CD8-positive, alpha-beta T cell (primary cell): ENCODE measurements at regions of chr2 and their contacts with region 1.

Region 1: GRCh38 chr2:178112202-178113152 is at the start of gene RBM45:
- DNase-seq: peak; percentile 62 to 93 (median 85)
- ATAC-seq: peak; percentile 91
- H3K4me3 ChIP-seq: peak within 1 kb of the TSS; percentile 73 to 81
- H3K4me3 Mint-ChIP-seq: peak within 1 kb of the TSS; percentile 94
- H3K27ac ChIP-seq: peak within 1 kb of the TSS; percentile 59 to 60
- H3K27ac Mint-ChIP-seq: peak within 1 kb of the TSS; percentile 89
- H3K4me1 ChIP-seq: peaks cover 16% of the 10 kb centered on the region
- H3K4me1 Mint-ChIP-seq: peaks cover 44% of the 10 kb centered on the region
- H3K27me3 ChIP-seq: no peaks in the 10 kb centered on the region
- H3K27me3 Mint-ChIP-seq: no peaks in the 10 kb centered on the region
- CTCF ChIP-seq: peak; percentile 95
- total RNA-seq, gene RBM45: 6.4 to 6.8 TPM

Region 2: GRCh38 chr2:177618255-177619253 is 493.9 kb before region 1 on chr2:
- CTCF ChIA-PET with region 1: no interaction called
- POLR2A ChIA-PET with region 1: no interaction called
- intact Hi-C with region 1: loop called (anchors 2 to 10 kb)
- DNase-seq: peak; percentile 80 to 96 (median 91)
- ATAC-seq: peak; percentile 89
- H3K4me3 ChIP-seq: peak overlapping the region; percentile 89 to 93
- H3K4me3 Mint-ChIP-seq: peak overlapping the region; percentile 97
- H3K27ac ChIP-seq: peak overlapping the region; percentile 97 to 99
- H3K27ac Mint-ChIP-seq: peak overlapping the region; percentile 98
- H3K4me1 ChIP-seq: peaks cover 8% of the 10 kb centered on the region
- H3K4me1 Mint-ChIP-seq: peaks cover 7% of the 10 kb centered on the region
- H3K27me3 ChIP-seq: no peaks in the 10 kb centered on the region
- H3K27me3 Mint-ChIP-seq: no peaks in the 10 kb centered on the region
- CTCF ChIP-seq: no peak

Region 3: DNA sequence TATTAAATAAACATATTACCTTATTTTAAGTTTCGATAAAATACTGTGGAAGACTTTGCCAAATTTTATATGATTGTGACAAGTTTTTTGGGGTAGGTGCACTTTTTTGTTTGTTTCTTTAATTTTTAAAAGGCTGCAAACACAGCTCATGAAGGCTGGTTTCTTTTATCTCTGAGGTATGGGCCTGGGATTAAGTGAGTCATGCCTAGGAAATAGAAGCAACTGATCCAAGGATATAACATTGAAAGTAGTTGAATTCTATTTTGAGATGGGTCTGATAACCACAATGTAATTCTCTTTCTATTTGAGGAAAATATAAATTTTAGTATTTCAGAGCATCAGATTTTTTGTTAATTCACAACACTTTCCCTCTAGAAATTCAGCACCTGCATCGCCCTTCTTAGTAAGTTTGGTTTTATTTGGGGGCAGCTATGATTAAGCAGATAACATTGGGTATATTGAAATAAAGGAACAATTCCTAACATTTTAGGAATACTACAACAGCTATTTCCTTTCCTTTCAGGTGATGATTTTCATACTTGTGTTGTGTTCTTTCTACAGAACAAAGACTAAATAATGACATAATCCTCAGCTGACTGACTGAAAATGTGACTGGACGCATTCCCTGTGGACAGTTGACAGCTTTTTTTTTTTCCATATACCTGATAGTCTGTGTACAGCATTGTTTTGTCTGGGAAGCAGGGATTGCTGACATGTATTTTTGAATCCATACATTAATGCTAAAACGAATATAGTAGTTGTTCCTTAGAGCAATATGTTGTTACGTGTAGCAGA is 16.6 kb after region 1 on chr2:
- CTCF ChIA-PET with region 1: interaction called, 21 read pairs
- POLR2A ChIA-PET with region 1: interaction called, 3 read pairs
- intact Hi-C with region 1: no loop called
- DNase-seq: no peak
- ATAC-seq: no peak
- H3K4me3 ChIP-seq: no peak overlapping the region
- H3K4me3 Mint-ChIP-seq: no peak overlapping the region
- H3K27ac ChIP-seq: no peak overlapping the region
- H3K27ac Mint-ChIP-seq: no peak overlapping the region
- H3K4me1 ChIP-seq: no peaks in the 10 kb centered on the region
- H3K4me1 Mint-ChIP-seq: peaks cover 2% of the 10 kb centered on the region
- H3K27me3 ChIP-seq: no peaks in the 10 kb centered on the region
- H3K27me3 Mint-ChIP-seq: no peaks in the 10 kb centered on the region
- CTCF ChIP-seq: no peak

Region 4: GRCh38 chr2:178163395-178163794 is 50.9 kb after region 1 on chr2:
- CTCF ChIA-PET with region 1: no interaction called
- POLR2A ChIA-PET with region 1: no interaction called
- intact Hi-C with region 1: no loop called
- DNase-seq: no peak
- ATAC-seq: no peak
- H3K4me3 ChIP-seq: no peak overlapping the region
- H3K4me3 Mint-ChIP-seq: no peak overlapping the region
- H3K27ac ChIP-seq: no peak overlapping the region
- H3K27ac Mint-ChIP-seq: no peak overlapping the region
- H3K4me1 ChIP-seq: no peaks in the 10 kb centered on the region
- H3K4me1 Mint-ChIP-seq: no peaks in the 10 kb centered on the region
- H3K27me3 ChIP-seq: no peaks in the 10 kb centered on the region
- H3K27me3 Mint-ChIP-seq: peaks cover 10% of the 10 kb centered on the region
- CTCF ChIP-seq: no peak

Region 5: DNA sequence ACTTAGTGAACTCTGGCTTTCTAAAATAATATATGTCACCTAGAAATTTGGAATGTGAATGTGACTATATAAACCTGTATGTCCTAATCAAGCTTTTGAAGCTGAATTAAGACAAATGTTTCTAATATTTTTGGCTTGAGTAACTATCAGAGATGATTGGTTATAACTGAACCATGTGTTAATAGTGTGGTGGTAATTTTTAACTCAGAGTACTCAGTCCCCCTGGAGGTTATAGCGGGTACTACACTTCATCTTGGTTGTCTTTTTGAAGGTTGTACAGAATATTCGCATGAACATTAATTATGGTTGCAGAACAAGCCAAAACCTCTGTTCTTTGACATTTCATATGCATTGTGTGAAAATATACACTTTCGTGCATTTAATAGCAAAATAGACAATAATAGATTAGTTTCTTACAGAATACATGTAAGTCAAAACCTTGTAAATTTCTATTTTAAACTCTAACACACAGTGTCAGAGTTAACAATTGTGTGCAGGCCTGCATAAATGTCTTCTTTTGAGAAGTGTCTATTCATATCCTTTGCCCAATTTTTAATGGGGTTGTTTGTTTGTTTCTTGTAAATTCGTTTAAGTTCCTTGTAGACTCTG is 167.9 kb after region 1 on chr2:
- CTCF ChIA-PET with region 1: interaction called, 9 read pairs
- POLR2A ChIA-PET with region 1: no interaction called
- intact Hi-C with region 1: loop called (anchors 1 to 2 kb)
- DNase-seq: peak in 5 of 9 experiments; percentile 15 to 54 (median 32)
- ATAC-seq: peak; percentile 75
- H3K4me3 ChIP-seq: no peak overlapping the region
- H3K4me3 Mint-ChIP-seq: no peak overlapping the region
- H3K27ac ChIP-seq: no peak overlapping the region
- H3K27ac Mint-ChIP-seq: no peak overlapping the region
- H3K4me1 ChIP-seq: no peaks in the 10 kb centered on the region
- H3K4me1 Mint-ChIP-seq: no peaks in the 10 kb centered on the region
- H3K27me3 ChIP-seq: no peaks in the 10 kb centered on the region
- H3K27me3 Mint-ChIP-seq: peaks cover 20% of the 10 kb centered on the region
- CTCF ChIP-seq: peak; percentile 79

Region 6: DNA sequence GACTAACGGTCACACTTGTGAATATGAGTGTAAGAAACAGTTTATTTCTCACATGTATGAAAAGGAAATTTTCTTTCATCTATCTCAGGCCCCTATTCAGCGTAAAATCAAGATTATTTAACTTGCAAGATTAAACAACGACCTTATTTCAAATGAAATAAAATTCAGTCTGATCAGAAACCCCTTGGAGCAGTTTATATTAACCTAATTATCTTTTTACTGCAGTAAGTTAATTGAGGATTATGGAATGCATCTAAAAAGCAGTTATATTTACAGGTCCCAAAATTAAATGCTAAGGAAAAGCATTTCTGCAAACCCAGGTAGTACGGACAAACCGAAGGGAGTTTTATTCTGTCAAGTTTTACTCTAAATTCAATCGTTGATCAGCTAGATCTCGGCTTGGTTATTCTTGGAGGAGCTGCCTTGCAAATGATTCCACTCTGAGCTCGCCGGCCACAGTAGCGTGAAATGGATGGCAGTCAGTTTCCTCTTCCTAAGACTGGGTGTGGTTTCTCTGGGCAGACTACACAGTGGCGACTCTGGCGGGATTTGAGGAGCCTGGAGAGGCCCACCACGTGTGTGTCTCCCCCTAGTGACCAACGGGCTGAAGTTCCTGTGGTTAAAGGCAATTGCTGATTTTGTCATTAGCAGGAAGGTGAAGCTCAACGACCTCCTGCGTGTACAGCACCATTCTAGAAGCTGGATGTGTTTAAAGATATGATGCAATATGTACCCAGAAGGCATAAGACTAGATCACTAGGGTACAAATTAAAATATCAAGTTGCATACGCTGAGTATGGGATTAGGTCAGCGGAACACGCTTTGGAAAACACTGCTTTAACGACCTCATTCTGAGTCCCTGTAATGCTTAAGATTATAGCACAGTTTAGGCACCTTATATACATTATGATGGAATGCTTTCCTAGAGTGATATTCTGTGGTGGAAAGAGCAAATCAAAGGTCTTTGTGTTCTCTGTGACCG is 302.1 kb after region 1 on chr2:
- CTCF ChIA-PET with region 1: interaction called, 17 read pairs
- POLR2A ChIA-PET with region 1: no interaction called
- intact Hi-C with region 1: loop called (anchors 1 to 2 kb)
- DNase-seq: peak; percentile 51 to 90 (median 75)
- ATAC-seq: peak; percentile 53
- H3K4me3 ChIP-seq: peak overlapping the region; percentile 54 to 66
- H3K4me3 Mint-ChIP-seq: peak overlapping the region; percentile 80
- H3K27ac ChIP-seq: peak overlapping the region; percentile 84 to 86
- H3K27ac Mint-ChIP-seq: peak overlapping the region; percentile 97
- H3K4me1 ChIP-seq: peaks cover 7% of the 10 kb centered on the region
- H3K4me1 Mint-ChIP-seq: peaks cover 30% of the 10 kb centered on the region
- H3K27me3 ChIP-seq: no peaks in the 10 kb centered on the region
- H3K27me3 Mint-ChIP-seq: no peaks in the 10 kb centered on the region
- CTCF ChIP-seq: peak; percentile 87

Region 7: GRCh38 chr2:178426388-178426787 is 313.9 kb after region 1 on chr2:
- CTCF ChIA-PET with region 1: no interaction called
- POLR2A ChIA-PET with region 1: no interaction called
- intact Hi-C with region 1: no loop called
- DNase-seq: no peak
- ATAC-seq: no peak
- H3K4me3 ChIP-seq: no peak overlapping the region
- H3K4me3 Mint-ChIP-seq: no peak overlapping the region
- H3K27ac ChIP-seq: no peak overlapping the region
- H3K27ac Mint-ChIP-seq: no peak overlapping the region
- H3K4me1 ChIP-seq: no peaks in the 10 kb centered on the region
- H3K4me1 Mint-ChIP-seq: no peaks in the 10 kb centered on the region
- H3K27me3 ChIP-seq: no peaks in the 10 kb centered on the region
- H3K27me3 Mint-ChIP-seq: no peaks in the 10 kb centered on the region
- CTCF ChIP-seq: no peak

Region 8: DNA sequence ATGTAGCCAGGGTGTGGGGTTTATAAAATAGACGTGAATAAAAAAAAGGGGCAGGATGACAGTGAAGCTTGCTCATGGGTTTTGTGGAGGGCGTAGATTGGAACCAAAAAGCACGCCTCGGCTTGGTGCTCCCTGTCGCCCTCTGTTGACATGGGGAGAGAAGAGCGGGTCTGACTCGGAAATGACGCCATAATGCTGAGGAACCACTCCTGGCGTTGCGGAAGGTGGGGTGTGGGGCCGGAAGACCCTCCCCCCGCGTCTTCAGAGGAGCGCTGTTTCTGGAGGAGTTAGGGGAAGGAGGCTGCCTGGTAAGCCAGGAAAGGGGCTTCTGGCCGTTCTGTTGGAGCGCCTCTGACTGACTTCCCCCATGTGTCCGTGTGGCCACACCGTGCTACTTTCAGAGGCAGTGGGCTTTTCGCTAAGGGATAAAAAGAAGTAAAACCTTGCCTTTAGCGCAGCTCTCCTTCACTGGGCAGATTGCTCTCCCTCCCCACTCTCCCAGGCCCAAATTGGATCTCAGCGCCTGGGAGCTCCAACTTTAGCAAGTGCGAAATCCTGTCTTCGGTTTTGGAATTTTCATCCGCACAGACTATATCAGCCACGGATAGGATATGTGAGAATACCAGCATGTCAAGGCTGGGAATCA is 410.6 kb after region 1 on chr2:
- CTCF ChIA-PET with region 1: no interaction called
- POLR2A ChIA-PET with region 1: no interaction called
- intact Hi-C with region 1: loop called in 1 of 2 experiments (anchors 5 kb)
- DNase-seq: peak; percentile 58 to 92 (median 81)
- ATAC-seq: peak; percentile 99
- H3K4me3 ChIP-seq: peak overlapping the region; percentile 65 to 82
- H3K4me3 Mint-ChIP-seq: peak overlapping the region; percentile 94
- H3K27ac ChIP-seq: peak overlapping the region; percentile 55 to 74
- H3K27ac Mint-ChIP-seq: peak overlapping the region; percentile 90
- H3K4me1 ChIP-seq: peaks cover 10% of the 10 kb centered on the region
- H3K4me1 Mint-ChIP-seq: peaks cover 41% of the 10 kb centered on the region
- H3K27me3 ChIP-seq: no peaks in the 10 kb centered on the region
- H3K27me3 Mint-ChIP-seq: no peaks in the 10 kb centered on the region
- CTCF ChIP-seq: peak; percentile 83

Region 9: GRCh38 chr2:178829299-178829960 is 717.0 kb after region 1 on chr2:
- CTCF ChIA-PET with region 1: no interaction called
- POLR2A ChIA-PET with region 1: no interaction called
- intact Hi-C with region 1: no loop called
- DNase-seq: peak in 1 of 9 experiments; percentile 24
- ATAC-seq: no peak
- H3K4me3 ChIP-seq: no peak overlapping the region
- H3K4me3 Mint-ChIP-seq: no peak overlapping the region
- H3K27ac ChIP-seq: no peak overlapping the region
- H3K27ac Mint-ChIP-seq: peak overlapping the region; percentile 14
- H3K4me1 ChIP-seq: peaks cover 10% of the 10 kb centered on the region
- H3K4me1 Mint-ChIP-seq: peaks cover 20% of the 10 kb centered on the region
- H3K27me3 ChIP-seq: no peaks in the 10 kb centered on the region
- H3K27me3 Mint-ChIP-seq: no peaks in the 10 kb centered on the region
- CTCF ChIP-seq: no peak